ENCODE measurements at regions of chr9 and their contacts with region 1.

Region 1: GRCh38 chr9:15211160-15211814 is 95.7 kb downstream of the TTC39B start:
- DNase-seq: peak; percentile 67
- ATAC-seq: peak; percentile 45
- H3K4me3 Mint-ChIP-seq: no peak overlapping the region
- H3K27ac Mint-ChIP-seq: no peak overlapping the region
- H3K4me1 Mint-ChIP-seq: peaks cover 23% of the 10 kb centered on the region
- H3K27me3 Mint-ChIP-seq: no peaks in the 10 kb centered on the region

Region 2: GRCh38 chr9:15306757-15307534 is 95.7 kb after region 1 on chr9 and contains the start of gene TTC39B:
- CTCF ChIA-PET with region 1: interaction called, 9 read pairs
- POLR2A ChIA-PET with region 1: interaction called, 3 read pairs
- intact Hi-C with region 1: loop called in 1 of 2 experiments (anchors 5 kb)
- DNase-seq: peak; percentile 90
- ATAC-seq: peak; percentile 83
- H3K4me3 Mint-ChIP-seq: peak within 1 kb of the TSS; percentile 98
- H3K27ac Mint-ChIP-seq: peak within 1 kb of the TSS; percentile 98
- H3K4me1 Mint-ChIP-seq: peaks cover 59% of the 10 kb centered on the region
- H3K27me3 Mint-ChIP-seq: no peaks in the 10 kb centered on the region
- total RNA-seq, gene TTC39B: 26.4 to 34.4 TPM

Region 3: DNA sequence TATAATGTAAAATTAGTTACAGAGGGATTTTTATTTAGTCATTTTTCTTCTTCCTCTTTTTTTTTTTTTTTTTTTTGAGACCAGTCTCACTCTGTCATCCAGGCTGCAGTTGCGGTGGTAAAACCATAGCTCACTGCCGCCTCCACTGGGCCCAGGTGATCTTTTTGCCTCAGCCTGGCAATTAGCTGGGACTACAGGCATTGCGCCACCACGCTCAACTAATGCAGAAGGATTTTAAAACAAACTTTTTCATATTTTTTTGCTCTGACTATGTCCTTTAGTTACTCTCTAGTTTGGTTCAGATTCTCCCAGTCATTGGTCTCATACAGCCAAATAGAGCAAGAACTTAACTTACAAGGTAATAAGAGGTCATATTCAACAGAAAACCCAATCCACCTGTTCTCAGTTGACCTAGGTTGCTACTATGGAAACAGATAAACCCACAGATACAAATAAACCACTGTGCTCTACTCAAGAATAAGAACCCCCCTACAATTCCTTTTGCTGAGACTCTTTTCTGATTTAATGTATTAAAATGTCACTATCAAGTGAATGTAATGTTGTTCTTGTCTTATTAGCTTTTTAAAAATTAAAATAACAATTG is 145.9 kb after region 1 on chr9:
- CTCF ChIA-PET with region 1: interaction called, 4 read pairs
- POLR2A ChIA-PET with region 1: no interaction called
- intact Hi-C with region 1: loop called in 1 of 2 experiments (anchors 1 kb)
- DNase-seq: peak; percentile 68
- ATAC-seq: peak; percentile 88
- H3K4me3 Mint-ChIP-seq: no peak overlapping the region
- H3K27ac Mint-ChIP-seq: no peak overlapping the region
- H3K4me1 Mint-ChIP-seq: peaks cover 12% of the 10 kb centered on the region
- H3K27me3 Mint-ChIP-seq: no peaks in the 10 kb centered on the region

Region 4: DNA sequence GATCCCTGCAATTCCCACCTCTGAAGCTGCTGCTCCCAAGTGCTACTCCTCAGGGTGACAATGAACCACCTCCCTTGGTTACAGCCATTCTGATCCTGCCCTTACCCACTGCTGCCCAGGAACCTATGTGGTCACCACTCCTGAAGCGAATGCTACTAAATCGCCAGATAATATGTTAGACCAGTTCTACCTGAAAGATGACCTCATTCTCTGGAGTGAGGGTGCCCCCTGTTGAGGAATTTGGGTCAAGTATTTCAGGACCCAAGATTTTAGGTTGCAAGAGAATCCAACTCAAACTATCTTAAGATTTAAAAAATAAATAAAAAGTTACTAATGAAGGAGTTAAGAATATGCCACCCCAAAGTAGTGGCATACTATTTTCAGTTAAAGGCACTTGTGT is 205.6 kb after region 1 on chr9:
- CTCF ChIA-PET with region 1: interaction called, 13 read pairs
- POLR2A ChIA-PET with region 1: no interaction called
- intact Hi-C with region 1: loop called (anchors 1 to 2 kb)
- DNase-seq: peak; percentile 61
- ATAC-seq: no peak
- H3K4me3 Mint-ChIP-seq: no peak overlapping the region
- H3K27ac Mint-ChIP-seq: no peak overlapping the region
- H3K4me1 Mint-ChIP-seq: peaks cover 1% of the 10 kb centered on the region
- H3K27me3 Mint-ChIP-seq: no peaks in the 10 kb centered on the region

Measured in activated CD4-positive, alpha-beta T cell treated with anti-CD3 and anti-CD28 coated beads for 36 hours (primary cell).